Naive thymus-derived CD4-positive, alpha-beta T cell (primary cell): ENCODE measurements at regions of chr1 and their contacts with region 1.

Region 1: GRCh38 chr1:36397378-36398230 is at the start of gene LSM10:
- DNase-seq: peak; percentile 71 to 92 (median 83)
- ATAC-seq: peak; percentile 77
- H3K4me3 ChIP-seq: peak within 1 kb of the TSS; percentile 88
- H3K4me3 Mint-ChIP-seq: peak within 1 kb of the TSS; percentile 87 to 100 (median 97)
- H3K27ac ChIP-seq: peak within 1 kb of the TSS; percentile 89
- H3K27ac Mint-ChIP-seq: peak within 1 kb of the TSS; percentile 82 to 100 (median 99)
- H3K4me1 ChIP-seq: peaks cover 13 to 16% of the 10 kb centered on the region in 2 donors
- H3K4me1 Mint-ChIP-seq: peaks cover 19 to 48% (median 34%) of the 10 kb centered on the region in 7 donors
- H3K27me3 ChIP-seq: no peaks in the 10 kb centered on the region
- H3K27me3 Mint-ChIP-seq: no peaks in the 10 kb centered on the region
- total RNA-seq, gene LSM10: 21.9 to 49.7 (median 35.7) TPM

Region 2: DNA sequence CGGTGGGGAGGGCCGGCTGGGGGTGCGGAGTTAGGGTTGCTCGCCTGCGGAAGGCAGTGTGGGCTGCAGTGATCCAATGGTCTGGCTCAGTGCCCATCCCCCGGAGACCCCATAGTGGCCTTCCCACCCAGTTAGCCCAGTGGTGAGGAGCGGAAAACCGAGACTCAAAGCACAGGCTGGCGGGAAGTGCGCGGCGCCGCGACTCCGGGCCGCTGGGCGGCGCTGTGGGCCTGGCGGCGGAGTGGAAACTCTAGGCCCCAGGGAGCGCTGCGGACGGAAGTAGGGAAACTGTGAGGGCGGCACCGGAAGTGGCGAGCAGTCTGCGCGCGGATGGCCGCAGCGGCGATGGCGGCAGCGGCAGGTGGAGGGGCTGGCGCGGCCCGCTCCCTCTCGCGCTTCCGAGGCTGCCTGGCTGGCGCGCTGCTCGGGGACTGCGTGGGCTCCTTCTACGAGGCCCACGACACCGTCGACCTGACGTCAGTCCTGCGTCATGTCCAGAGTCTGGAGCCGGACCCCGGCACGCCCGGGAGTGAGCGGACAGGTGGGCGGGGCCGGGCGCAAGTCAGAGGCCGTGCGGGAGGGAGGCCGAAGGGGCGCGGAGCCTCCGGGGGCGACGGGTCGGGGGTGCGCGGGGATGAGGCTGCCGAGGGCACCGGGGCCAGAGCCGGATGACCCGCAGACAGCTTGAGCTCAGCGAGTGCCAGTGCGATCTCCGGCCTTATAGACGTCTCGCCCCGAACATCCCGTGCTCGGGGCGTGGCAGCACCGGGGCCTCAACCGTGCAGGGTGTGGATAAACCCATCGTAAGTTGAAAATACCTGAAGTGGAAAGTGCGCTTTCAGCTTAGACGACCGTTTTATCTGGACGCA is 308.8 kb before region 1 on chr1 and contains the start of gene ADPRS:
- CTCF ChIA-PET with region 1: no interaction called
- POLR2A ChIA-PET with region 1: no interaction called
- intact Hi-C with region 1: loop called in 1 of 2 experiments (anchors 5 kb)
- DNase-seq: peak; percentile 81 to 95 (median 88)
- ATAC-seq: peak; percentile 98
- H3K4me3 ChIP-seq: peak within 1 kb of the TSS; percentile 47
- H3K4me3 Mint-ChIP-seq: peak within 1 kb of the TSS; percentile 83 to 96 (median 93)
- H3K27ac ChIP-seq: peak within 1 kb of the TSS; percentile 98
- H3K27ac Mint-ChIP-seq: peak within 1 kb of the TSS; percentile 86 to 97 (median 90)
- H3K4me1 ChIP-seq: peaks cover 11 to 16% of the 10 kb centered on the region in 2 donors
- H3K4me1 Mint-ChIP-seq: peaks cover 12 to 30% (median 23%) of the 10 kb centered on the region in 7 donors
- H3K27me3 ChIP-seq: peaks cover 0 to 5% of the 10 kb centered on the region in 2 donors
- H3K27me3 Mint-ChIP-seq: peaks cover 10 to 18% (median 10%) of the 10 kb centered on the region in 5 donors
- total RNA-seq, gene ADPRS: 18.0 to 30.2 (median 24.2) TPM

Region 3: DNA sequence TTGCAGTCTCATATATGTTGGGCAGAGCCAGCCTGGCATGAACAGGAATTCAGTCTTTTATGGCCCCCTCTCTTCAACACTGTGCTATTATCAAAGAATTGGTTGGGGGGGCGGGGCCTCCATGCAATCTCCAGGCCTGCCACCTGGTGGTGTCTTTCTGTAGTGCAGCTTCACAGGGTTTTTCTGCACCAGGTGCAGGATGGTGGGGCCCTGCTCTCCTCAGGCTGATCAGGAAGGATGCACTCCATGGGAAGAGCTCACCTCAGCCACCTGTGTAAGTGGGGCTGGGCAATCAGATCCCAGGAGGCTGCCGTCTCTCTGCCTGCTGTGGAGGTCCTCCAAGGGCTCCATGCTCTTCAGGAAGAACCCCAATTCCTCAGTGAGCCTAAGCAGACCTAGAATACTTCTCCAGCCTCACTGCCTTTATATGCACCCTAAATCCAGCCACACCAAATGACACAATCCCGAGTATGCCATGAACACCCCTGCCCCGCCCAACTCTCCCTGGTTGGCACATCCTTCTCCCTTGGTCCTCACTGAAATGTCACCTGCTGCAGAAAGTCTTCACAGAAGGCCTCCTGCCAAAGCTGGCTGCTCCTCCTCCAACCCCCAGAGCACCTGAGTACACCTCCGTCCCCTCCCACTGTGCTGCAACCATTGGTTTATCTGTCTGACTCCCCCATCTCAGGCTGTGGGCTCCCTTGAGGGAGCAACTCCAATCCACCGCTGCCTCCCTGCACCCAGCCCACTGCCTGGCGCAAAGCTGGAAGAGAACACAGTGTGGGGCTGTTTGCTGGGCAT is 28.3 kb before region 1 on chr1:
- CTCF ChIA-PET with region 1: interaction called, 12 read pairs
- POLR2A ChIA-PET with region 1: interaction called, 23 read pairs
- intact Hi-C with region 1: loop called in 1 of 2 experiments (anchors 2 kb)
- DNase-seq: peak; percentile 70 to 87 (median 80)
- ATAC-seq: peak; percentile 75
- H3K4me3 ChIP-seq: no peak overlapping the region
- H3K4me3 Mint-ChIP-seq: peak overlapping the region in 7 of 10 donors; percentile 2 to 57 (median 32)
- H3K27ac ChIP-seq: peak overlapping the region; percentile 37
- H3K27ac Mint-ChIP-seq: peak overlapping the region; percentile 56 to 97 (median 94)
- H3K4me1 ChIP-seq: peaks cover 27 to 59% of the 10 kb centered on the region in 2 donors
- H3K4me1 Mint-ChIP-seq: peaks cover 50 to 79% (median 69%) of the 10 kb centered on the region in 7 donors
- H3K27me3 ChIP-seq: no peaks in the 10 kb centered on the region
- H3K27me3 Mint-ChIP-seq: no peaks in the 10 kb centered on the region

Region 4: DNA sequence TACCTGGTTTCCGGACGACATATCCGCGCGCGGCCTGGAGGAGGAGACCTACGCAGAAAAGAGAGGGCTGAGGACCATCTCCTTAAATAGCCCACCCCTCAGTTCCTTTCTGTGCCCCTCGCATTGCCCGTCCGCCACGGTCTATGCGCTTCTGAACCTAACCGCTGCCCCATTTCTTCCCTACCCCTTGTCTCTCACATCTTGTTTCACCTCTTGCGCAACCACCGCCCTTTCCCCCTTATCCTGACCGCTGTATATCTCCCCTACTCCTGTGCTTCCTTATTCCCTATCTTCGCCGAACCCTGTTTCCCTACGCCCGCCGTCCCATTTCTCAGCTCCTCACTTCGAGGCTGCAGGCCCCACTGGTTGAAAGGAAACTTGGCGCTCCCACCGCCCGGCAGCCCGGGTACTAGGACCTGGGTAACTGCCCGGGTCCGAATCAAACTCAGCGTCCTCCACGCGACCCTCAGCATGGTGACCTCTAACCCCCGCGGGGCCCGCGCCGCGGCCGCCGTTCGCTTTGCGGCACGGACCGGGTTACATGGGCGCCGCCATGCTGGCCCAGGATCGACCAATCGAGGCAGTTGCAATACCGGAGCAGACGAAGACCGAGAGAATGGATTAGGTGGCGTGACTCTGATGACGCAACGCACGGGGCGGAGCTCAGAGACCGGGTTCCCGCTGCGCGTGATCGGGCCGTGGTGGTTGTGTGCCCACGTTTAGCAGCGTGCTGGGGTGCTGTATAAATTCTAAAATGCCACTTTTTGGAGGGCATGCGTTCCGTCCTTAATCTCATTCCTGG is 66.4 kb after region 1 on chr1 and contains the start of gene MRPS15:
- CTCF ChIA-PET with region 1: no interaction called
- POLR2A ChIA-PET with region 1: interaction called, 8 read pairs
- intact Hi-C with region 1: loop called in 1 of 2 experiments (anchors 2 kb)
- DNase-seq: peak; percentile 85 to 95 (median 93)
- ATAC-seq: peak; percentile 99
- H3K4me3 ChIP-seq: peak within 1 kb of the TSS; percentile 85
- H3K4me3 Mint-ChIP-seq: peak within 1 kb of the TSS; percentile 86 to 100 (median 97)
- H3K27ac ChIP-seq: peak within 1 kb of the TSS; percentile 91
- H3K27ac Mint-ChIP-seq: peak within 1 kb of the TSS; percentile 90 to 99 (median 98)
- H3K4me1 ChIP-seq: peaks cover 7 to 13% of the 10 kb centered on the region in 2 donors
- H3K4me1 Mint-ChIP-seq: peaks cover 18 to 54% (median 43%) of the 10 kb centered on the region in 7 donors
- H3K27me3 ChIP-seq: no peaks in the 10 kb centered on the region
- H3K27me3 Mint-ChIP-seq: no peaks in the 10 kb centered on the region
- total RNA-seq, gene MRPS15: 30.2 to 84.0 (median 36.3) TPM